HEK293T (cell line): ENCODE measurements at regions of chr12 and their contacts with region 1.

Region 1: DNA sequence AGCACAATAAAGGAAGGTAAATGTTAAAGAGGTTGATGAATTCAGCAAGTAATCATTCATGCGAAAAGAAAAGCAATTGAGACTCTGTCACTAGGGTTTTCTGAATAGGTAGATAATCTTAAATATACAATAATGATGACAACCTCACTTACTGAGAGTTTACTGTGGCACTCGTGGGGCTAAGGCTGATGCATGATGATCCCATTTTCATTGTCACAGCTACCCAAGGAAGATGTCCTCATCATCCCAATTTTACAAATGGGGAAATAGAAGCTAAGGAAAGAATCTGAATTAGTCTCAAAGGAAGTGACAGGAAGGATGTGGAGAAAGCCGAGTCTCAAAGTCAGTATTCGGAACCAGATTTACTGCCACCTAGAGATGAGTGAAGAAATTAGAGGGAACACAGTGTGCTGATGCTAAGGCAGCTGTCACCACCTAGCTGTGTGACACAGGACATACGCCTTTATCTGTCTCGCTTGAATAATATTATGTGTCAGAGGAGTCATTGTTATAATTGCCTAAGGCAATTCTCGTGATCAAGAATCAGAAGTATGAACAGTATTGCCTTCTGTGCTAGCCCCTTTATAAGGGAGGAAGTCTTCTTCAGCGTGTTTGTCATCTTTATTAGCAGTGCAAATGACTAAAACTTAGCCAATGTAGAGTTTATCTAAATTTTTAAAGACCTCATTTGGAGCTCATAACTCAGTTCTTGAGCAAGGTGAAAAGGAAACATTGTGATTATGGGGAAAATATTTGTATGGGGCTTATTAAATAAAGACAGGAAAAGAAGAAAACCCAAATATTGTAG is 63.2 kb downstream of the ERGIC2 start:
- DNase-seq: peak; percentile 61

Region 2: GRCh38 chr12:29073628-29074239 is 244.0 kb before region 1 on chr12:
- CTCF ChIA-PET with region 1: interaction called, 14 read pairs
- POLR2A ChIA-PET with region 1: no interaction called
- DNase-seq: peak; percentile 46